ENCODE measurements at regions of chr1 and their contacts with region 1.

Region 1: GRCh38 chr1:115469703-115470476 is 131.8 kb upstream of the NGF start:
- DNase-seq: peak; percentile 46
- H3K4me3 Mint-ChIP-seq: no peak overlapping the region
- H3K27ac Mint-ChIP-seq: no peak overlapping the region
- H3K4me1 Mint-ChIP-seq: peaks cover 4% of the 10 kb centered on the region
- H3K27me3 Mint-ChIP-seq: peaks cover 6% of the 10 kb centered on the region

Region 2: GRCh38 chr1:115275212-115275611 is 194.7 kb before region 1 on chr1:
- CTCF ChIA-PET with region 1: no interaction called
- POLR2A ChIA-PET with region 1: no interaction called
- intact Hi-C with region 1: loop called (anchors 5 kb)
- DNase-seq: no peak
- H3K4me3 Mint-ChIP-seq: no peak overlapping the region
- H3K27ac Mint-ChIP-seq: no peak overlapping the region
- H3K4me1 Mint-ChIP-seq: peaks cover 2% of the 10 kb centered on the region
- H3K27me3 Mint-ChIP-seq: peaks cover 6% of the 10 kb centered on the region

Measured in activated CD4-positive, alpha-beta memory T cell treated with anti-CD3 and anti-CD28 coated beads for 36 hours (primary cell).